ENCODE measurements at regions of chr1 and their contacts with region 1.

Region 1: DNA sequence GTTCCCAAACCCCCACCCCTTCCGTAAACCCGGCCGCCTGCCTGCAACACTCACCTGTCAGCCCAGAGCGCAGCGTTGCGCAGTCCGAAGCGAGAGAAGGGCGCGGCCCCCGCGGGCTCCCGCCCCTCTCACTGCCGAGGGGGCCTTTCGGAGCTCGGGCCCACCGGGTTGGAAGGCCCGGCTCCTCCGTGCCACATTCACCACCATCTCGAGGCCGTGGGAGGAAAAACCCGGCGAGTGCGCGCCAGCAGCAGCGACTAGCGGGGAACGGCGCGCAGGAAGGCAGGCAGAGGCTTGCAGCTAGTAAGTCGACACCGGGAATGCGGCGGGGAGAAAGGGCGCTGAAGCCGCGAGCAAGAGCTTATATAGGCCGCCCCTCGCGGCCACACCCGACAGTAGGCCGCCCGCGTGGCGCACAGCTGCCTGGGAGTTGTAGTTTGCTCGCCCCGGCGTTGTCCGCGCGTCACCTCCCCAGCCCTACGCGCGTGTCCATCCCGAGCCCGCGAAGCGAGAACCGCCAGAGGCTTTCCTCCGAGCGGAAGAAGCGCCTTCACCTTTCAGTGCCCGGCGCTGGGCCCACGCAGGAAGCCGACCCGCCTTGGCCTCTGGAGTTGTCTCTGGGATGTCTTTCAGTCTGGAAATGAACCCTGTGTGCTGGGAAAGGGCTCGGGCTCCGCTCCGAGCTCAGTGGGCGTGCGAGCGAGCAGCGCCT is 10.4 kb upstream of the RAB42 start:
- DNase-seq: peak; percentile 96
- ATAC-seq: peak; percentile 92
- H3K4me3 ChIP-seq: peak overlapping the region; percentile 69 to 99 (median 94)
- H3K4me3 Mint-ChIP-seq: peak overlapping the region; percentile 96
- H3K27ac ChIP-seq: peak overlapping the region; percentile 69 to 82
- H3K27ac Mint-ChIP-seq: peak overlapping the region; percentile 95
- H3K4me1 ChIP-seq: peaks cover 15 to 35% of the 10 kb centered on the region in 2 donors
- H3K4me1 Mint-ChIP-seq: peaks cover 40% of the 10 kb centered on the region
- H3K27me3 ChIP-seq: no peaks in the 10 kb centered on the region
- H3K27me3 Mint-ChIP-seq: no peaks in the 10 kb centered on the region
- CTCF ChIP-seq: peak; percentile 7

Region 2: GRCh38 chr1:28259307-28260167 is 322.2 kb before region 1 on chr1 and contains the start of gene SESN2:
- CTCF ChIA-PET with region 1: no interaction called
- POLR2A ChIA-PET with region 1: interaction called, 3 read pairs
- intact Hi-C with region 1: loop called (anchors 1 kb)
- DNase-seq: peak; percentile 98
- ATAC-seq: peak; percentile 99
- H3K4me3 ChIP-seq: peak within 1 kb of the TSS; percentile 65 to 96 (median 92)
- H3K4me3 Mint-ChIP-seq: peak within 1 kb of the TSS; percentile 84
- H3K27ac ChIP-seq: peak within 1 kb of the TSS in 1 of 2 donors; percentile 64
- H3K27ac Mint-ChIP-seq: peak within 1 kb of the TSS; percentile 75
- H3K4me1 ChIP-seq: peaks cover 22% of the 10 kb centered on the region in 2 donors
- H3K4me1 Mint-ChIP-seq: peaks cover 19% of the 10 kb centered on the region
- H3K27me3 ChIP-seq: peaks cover 0 to 4% (median 1%) of the 10 kb centered on the region in 4 experiments
- H3K27me3 Mint-ChIP-seq: peaks cover 16% of the 10 kb centered on the region
- CTCF ChIP-seq: no peak
- total RNA-seq, gene SESN2: 4.5 and 4.8 TPM in 2 replicates

Region 3: DNA sequence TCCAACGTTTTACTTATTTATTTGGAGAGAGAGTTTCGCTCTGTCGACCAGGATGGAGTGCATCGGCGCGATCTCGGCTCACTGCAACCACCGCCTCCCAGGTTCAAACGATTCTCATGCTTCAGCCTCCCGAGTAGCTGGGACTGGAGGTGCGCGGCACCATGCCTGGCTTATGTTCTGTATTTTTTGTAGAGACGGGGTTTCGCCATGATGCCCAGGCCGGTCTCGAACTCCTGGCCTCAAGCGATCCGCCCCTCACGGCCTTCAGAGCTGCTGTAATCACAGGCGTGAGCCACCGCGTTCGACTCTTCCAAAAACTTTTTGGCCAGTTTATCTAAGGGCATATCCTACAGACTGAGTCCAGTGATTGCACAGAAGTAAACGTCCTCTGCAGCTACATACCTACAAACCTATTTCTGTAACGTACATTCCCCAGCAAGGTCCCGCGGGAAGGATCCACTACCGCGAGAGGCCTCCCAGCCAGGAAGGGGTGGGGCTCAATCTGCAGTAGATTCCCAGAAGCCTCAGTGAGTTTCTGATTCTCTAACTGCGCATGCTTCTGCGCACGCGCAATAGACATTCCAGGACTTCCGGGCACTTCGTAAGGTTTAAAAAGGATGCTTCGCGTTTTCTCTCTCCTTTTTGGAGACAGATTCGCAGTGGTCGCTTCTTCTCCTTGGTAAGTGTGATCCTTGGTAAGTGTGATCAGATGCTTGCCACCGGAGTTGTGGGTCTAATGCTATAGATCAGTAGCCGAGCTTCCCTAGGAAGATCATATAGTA is 76.1 kb before region 1 on chr1 and contains the start of gene RCC1:
- CTCF ChIA-PET with region 1: interaction called, 4 read pairs
- POLR2A ChIA-PET with region 1: interaction called, 23 read pairs
- intact Hi-C with region 1: loop called (anchors 1 kb)
- DNase-seq: peak; percentile 98
- ATAC-seq: peak; percentile 94
- H3K4me3 ChIP-seq: peak within 1 kb of the TSS; percentile 60 to 84 (median 80)
- H3K4me3 Mint-ChIP-seq: peak within 1 kb of the TSS; percentile 97
- H3K27ac ChIP-seq: peak within 1 kb of the TSS; percentile 65 to 67
- H3K27ac Mint-ChIP-seq: peak within 1 kb of the TSS; percentile 98
- H3K4me1 ChIP-seq: peaks cover 38 to 48% of the 10 kb centered on the region in 2 donors
- H3K4me1 Mint-ChIP-seq: peaks cover 42% of the 10 kb centered on the region
- H3K27me3 ChIP-seq: no peaks in the 10 kb centered on the region
- H3K27me3 Mint-ChIP-seq: no peaks in the 10 kb centered on the region
- CTCF ChIP-seq: no peak
- total RNA-seq, gene RCC1: 16.3 and 17.5 TPM in 2 replicates

Region 4: DNA sequence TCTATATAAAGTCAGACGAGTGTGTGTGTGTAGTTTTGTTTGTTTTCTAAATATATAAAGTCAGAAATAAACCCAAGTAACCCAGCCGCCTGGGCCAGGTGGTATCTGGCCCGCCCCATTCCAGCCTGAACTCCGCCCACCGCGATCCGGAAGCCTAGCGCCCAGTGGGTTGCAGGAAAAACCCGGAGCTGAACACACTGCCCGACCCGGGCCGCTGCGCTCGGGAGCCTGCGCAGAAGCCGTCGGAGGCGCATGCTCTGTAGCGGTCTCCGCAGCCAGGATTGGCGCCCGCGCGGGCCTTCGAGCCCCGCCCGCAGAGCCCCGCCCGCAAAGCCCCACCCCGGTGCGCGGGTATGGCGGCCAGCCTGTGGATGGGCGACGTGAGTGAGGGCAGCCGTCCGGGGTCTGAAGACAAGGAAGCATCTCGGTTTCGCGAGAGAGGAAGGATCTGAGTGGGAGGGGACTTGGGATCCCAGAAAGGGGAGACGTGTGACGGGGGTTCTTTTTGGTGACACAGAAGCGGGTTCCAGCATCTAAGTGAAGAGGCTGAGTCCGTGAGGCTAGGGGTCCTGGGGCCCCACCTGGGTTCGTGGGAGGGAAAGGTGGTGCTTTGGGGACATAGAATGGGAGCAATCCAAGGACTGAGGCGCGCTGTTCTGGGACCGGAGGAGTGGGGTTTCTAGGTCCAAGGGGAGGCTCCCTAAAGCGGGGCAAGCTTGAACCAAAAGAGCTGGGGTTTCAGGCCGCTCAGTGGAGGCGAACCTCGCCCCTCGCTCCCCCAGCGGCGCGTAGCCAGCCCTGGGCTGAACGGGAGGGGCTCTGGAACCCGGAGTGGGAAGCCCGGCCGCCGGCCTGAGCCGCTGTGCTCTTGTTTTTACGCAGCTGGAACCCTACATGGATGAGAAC is 28.7 kb before region 1 on chr1 and contains the start of gene TRNAU1AP:
- CTCF ChIA-PET with region 1: interaction called, 23 read pairs
- POLR2A ChIA-PET with region 1: interaction called, 21 read pairs
- intact Hi-C with region 1: loop called (anchors 1 kb)
- DNase-seq: peak; percentile 98
- ATAC-seq: peak; percentile 94
- H3K4me3 ChIP-seq: peak within 1 kb of the TSS; percentile 77 to 97 (median 90)
- H3K4me3 Mint-ChIP-seq: peak within 1 kb of the TSS; percentile 100
- H3K27ac ChIP-seq: peak within 1 kb of the TSS; percentile 82 to 86
- H3K27ac Mint-ChIP-seq: peak within 1 kb of the TSS; percentile 99
- H3K4me1 ChIP-seq: peaks cover 5 to 17% of the 10 kb centered on the region in 2 donors
- H3K4me1 Mint-ChIP-seq: peaks cover 18% of the 10 kb centered on the region
- H3K27me3 ChIP-seq: no peaks in the 10 kb centered on the region
- H3K27me3 Mint-ChIP-seq: no peaks in the 10 kb centered on the region
- CTCF ChIP-seq: no peak
- total RNA-seq, gene TRNAU1AP: 45.2 and 48.5 TPM in 2 replicates

Region 5: GRCh38 chr1:28642847-28643635 is 61.3 kb after region 1 on chr1 and contains the start of gene TAF12:
- CTCF ChIA-PET with region 1: interaction called, 6 read pairs
- POLR2A ChIA-PET with region 1: interaction called, 36 read pairs
- intact Hi-C with region 1: loop called (anchors 1 kb)
- DNase-seq: peak; percentile 97
- ATAC-seq: peak; percentile 84
- H3K4me3 ChIP-seq: peak within 1 kb of the TSS; percentile 67 to 91 (median 89)
- H3K4me3 Mint-ChIP-seq: peak within 1 kb of the TSS; percentile 100
- H3K27ac ChIP-seq: peak within 1 kb of the TSS; percentile 97 to 100
- H3K27ac Mint-ChIP-seq: peak within 1 kb of the TSS; percentile 99
- H3K4me1 ChIP-seq: peaks cover 29 to 31% of the 10 kb centered on the region in 2 donors
- H3K4me1 Mint-ChIP-seq: peaks cover 49% of the 10 kb centered on the region
- H3K27me3 ChIP-seq: no peaks in the 10 kb centered on the region
- H3K27me3 Mint-ChIP-seq: no peaks in the 10 kb centered on the region
- CTCF ChIP-seq: peak; percentile 54
- total RNA-seq, gene TAF12: 18.5 and 19.1 TPM in 2 replicates

Region 6: GRCh38 chr1:28668191-28668955 is 86.7 kb after region 1 on chr1 and contains the start of gene GMEB1:
- CTCF ChIA-PET with region 1: interaction called, 3 read pairs
- POLR2A ChIA-PET with region 1: interaction called, 11 read pairs
- intact Hi-C with region 1: no loop called
- DNase-seq: peak; percentile 88
- ATAC-seq: peak; percentile 65
- H3K4me3 ChIP-seq: peak within 1 kb of the TSS; percentile 68 to 95 (median 94)
- H3K4me3 Mint-ChIP-seq: peak within 1 kb of the TSS; percentile 94
- H3K27ac ChIP-seq: peak within 1 kb of the TSS; percentile 95 to 98
- H3K27ac Mint-ChIP-seq: peak within 1 kb of the TSS; percentile 99
- H3K4me1 ChIP-seq: peaks cover 5 to 24% of the 10 kb centered on the region in 2 donors
- H3K4me1 Mint-ChIP-seq: peaks cover 19% of the 10 kb centered on the region
- H3K27me3 ChIP-seq: no peaks in the 10 kb centered on the region
- H3K27me3 Mint-ChIP-seq: no peaks in the 10 kb centered on the region
- CTCF ChIP-seq: no peak
- total RNA-seq, gene GMEB1: 21.7 and 24.8 TPM in 2 replicates

Region 7: DNA sequence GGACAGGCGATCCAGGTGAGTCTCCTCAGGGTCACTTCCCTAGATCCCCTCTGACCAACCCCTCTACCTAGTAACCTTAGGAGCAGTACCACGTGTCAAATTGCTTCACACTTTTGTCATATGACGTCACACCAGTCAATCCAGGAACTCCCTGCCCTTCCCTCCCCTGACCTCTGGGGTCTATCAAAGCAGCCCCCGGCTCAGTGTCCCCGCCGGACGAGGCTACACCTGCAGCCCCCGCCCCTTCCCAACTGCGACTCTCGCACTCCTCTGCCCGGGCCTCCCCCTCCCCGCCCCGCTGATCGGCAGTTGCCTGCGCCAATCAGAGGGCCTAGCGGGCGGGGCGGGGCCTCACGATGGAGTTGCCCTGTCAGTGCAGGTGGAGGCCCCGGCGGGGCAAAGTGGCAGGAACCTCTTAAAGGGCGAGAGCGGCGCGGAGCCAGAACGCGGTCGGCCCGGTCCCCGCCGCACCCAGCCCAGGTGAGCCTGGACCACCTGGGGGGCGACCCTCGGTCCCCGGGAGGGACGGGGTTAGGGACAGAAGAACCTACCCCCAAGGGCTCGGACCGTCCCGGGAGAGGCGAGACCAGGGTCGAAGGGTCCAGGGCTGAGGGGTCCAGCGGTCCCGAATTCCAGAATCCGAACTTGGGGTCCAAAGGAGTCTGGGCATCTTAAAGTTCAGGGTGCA is 305.2 kb after region 1 on chr1:
- CTCF ChIA-PET with region 1: interaction called, 3 read pairs
- POLR2A ChIA-PET with region 1: interaction called, 6 read pairs
- intact Hi-C with region 1: loop called (anchors 5 kb)
- DNase-seq: peak; percentile 94
- ATAC-seq: peak; percentile 73
- H3K4me3 ChIP-seq: peak overlapping the region; percentile 76 to 93 (median 82)
- H3K4me3 Mint-ChIP-seq: peak overlapping the region; percentile 92
- H3K27ac ChIP-seq: peak overlapping the region; percentile 56 to 97
- H3K27ac Mint-ChIP-seq: peak overlapping the region; percentile 95
- H3K4me1 ChIP-seq: peaks cover 26 to 54% of the 10 kb centered on the region in 2 donors
- H3K4me1 Mint-ChIP-seq: peaks cover 63% of the 10 kb centered on the region
- H3K27me3 ChIP-seq: no peaks in the 10 kb centered on the region
- H3K27me3 Mint-ChIP-seq: no peaks in the 10 kb centered on the region
- CTCF ChIP-seq: no peak